Caco-2 (cell line): ENCODE measurements at regions of chr11 and their contacts with region 1.

Region 1: GRCh38 chr11:57345555-57346211 is 7.5 kb downstream of the P2RX3 start:
- DNase-seq: peak; percentile 76 to 82
- H3K4me3 ChIP-seq: no peak overlapping the region
- H3K4me3 Mint-ChIP-seq: no peak overlapping the region
- H3K27ac Mint-ChIP-seq: no peak overlapping the region
- H3K4me1 ChIP-seq: peaks cover 6% of the 10 kb centered on the region; the same call in 1 of the 2 replicates
- H3K4me1 Mint-ChIP-seq: peaks cover 7% of the 10 kb centered on the region
- H3K27me3 ChIP-seq: no peaks in the 10 kb centered on the region
- H3K27me3 Mint-ChIP-seq: no peaks in the 10 kb centered on the region
- CTCF ChIP-seq: peak; percentile 78 to 86

Region 2: GRCh38 chr11:56988614-56989013 is 357.1 kb before region 1 on chr11 and contains the start of gene OR5AK2:
- CTCF ChIA-PET with region 1: no interaction called
- POLR2A ChIA-PET with region 1: no interaction called
- intact Hi-C with region 1: no loop called
- DNase-seq: no peak
- H3K4me3 ChIP-seq: no peak within 1 kb of the TSS
- H3K4me3 Mint-ChIP-seq: no peak within 1 kb of the TSS
- H3K27ac Mint-ChIP-seq: no peak within 1 kb of the TSS
- H3K4me1 ChIP-seq: no peaks in the 10 kb centered on the region
- H3K4me1 Mint-ChIP-seq: no peaks in the 10 kb centered on the region
- H3K27me3 ChIP-seq: no peaks in the 10 kb centered on the region
- H3K27me3 Mint-ChIP-seq: no peaks in the 10 kb centered on the region
- CTCF ChIP-seq: no peak
- total RNA-seq, gene OR5AK2: not detected in 2 replicates

Region 3: GRCh38 chr11:57213342-57214095 is 132.2 kb before region 1 on chr11:
- CTCF ChIA-PET with region 1: no interaction called
- POLR2A ChIA-PET with region 1: no interaction called
- intact Hi-C with region 1: no loop called
- DNase-seq: no peak
- H3K4me3 ChIP-seq: no peak overlapping the region
- H3K4me3 Mint-ChIP-seq: no peak overlapping the region
- H3K27ac Mint-ChIP-seq: no peak overlapping the region
- H3K4me1 ChIP-seq: no peaks in the 10 kb centered on the region
- H3K4me1 Mint-ChIP-seq: no peaks in the 10 kb centered on the region
- H3K27me3 ChIP-seq: no peaks in the 10 kb centered on the region
- H3K27me3 Mint-ChIP-seq: peaks cover 5% of the 10 kb centered on the region
- CTCF ChIP-seq: no peak

Region 4: GRCh38 chr11:57269571-57270021 is 76.1 kb before region 1 on chr11:
- CTCF ChIA-PET with region 1: no interaction called
- POLR2A ChIA-PET with region 1: no interaction called
- intact Hi-C with region 1: no loop called
- DNase-seq: no peak
- H3K4me3 ChIP-seq: no peak overlapping the region
- H3K4me3 Mint-ChIP-seq: no peak overlapping the region
- H3K27ac Mint-ChIP-seq: no peak overlapping the region
- H3K4me1 ChIP-seq: no peaks in the 10 kb centered on the region
- H3K4me1 Mint-ChIP-seq: no peaks in the 10 kb centered on the region
- H3K27me3 ChIP-seq: no peaks in the 10 kb centered on the region; the same call in 1 of the 2 replicates
- H3K27me3 Mint-ChIP-seq: peaks cover 3% of the 10 kb centered on the region
- CTCF ChIP-seq: no peak

Region 5: GRCh38 chr11:57358543-57358961 is 12.9 kb after region 1 on chr11:
- CTCF ChIA-PET with region 1: interaction called, 11 read pairs
- POLR2A ChIA-PET with region 1: interaction called, 14 read pairs
- intact Hi-C with region 1: no loop called
- DNase-seq: no peak
- H3K4me3 ChIP-seq: no peak overlapping the region
- H3K4me3 Mint-ChIP-seq: no peak overlapping the region
- H3K27ac Mint-ChIP-seq: peak overlapping the region; percentile 74
- H3K4me1 ChIP-seq: peaks cover 40% of the 10 kb centered on the region
- H3K4me1 Mint-ChIP-seq: peaks cover 27% of the 10 kb centered on the region
- H3K27me3 ChIP-seq: no peaks in the 10 kb centered on the region
- H3K27me3 Mint-ChIP-seq: no peaks in the 10 kb centered on the region
- CTCF ChIP-seq: no peak

Region 6: GRCh38 chr11:57370251-57370650 is 24.6 kb after region 1 on chr11:
- CTCF ChIA-PET with region 1: no interaction called
- POLR2A ChIA-PET with region 1: no interaction called
- intact Hi-C with region 1: no loop called
- DNase-seq: no peak
- H3K4me3 ChIP-seq: no peak overlapping the region
- H3K4me3 Mint-ChIP-seq: no peak overlapping the region
- H3K27ac Mint-ChIP-seq: no peak overlapping the region
- H3K4me1 ChIP-seq: no peaks in the 10 kb centered on the region
- H3K4me1 Mint-ChIP-seq: no peaks in the 10 kb centered on the region
- H3K27me3 ChIP-seq: no peaks in the 10 kb centered on the region
- H3K27me3 Mint-ChIP-seq: no peaks in the 10 kb centered on the region
- CTCF ChIP-seq: no peak

Region 7: GRCh38 chr11:57456960-57457642 is 111.4 kb after region 1 on chr11:
- CTCF ChIA-PET with region 1: interaction called, 20 read pairs
- POLR2A ChIA-PET with region 1: no interaction called
- intact Hi-C with region 1: loop called (anchors 1 kb)
- DNase-seq: peak; percentile 88 to 92
- H3K4me3 ChIP-seq: no peak overlapping the region
- H3K4me3 Mint-ChIP-seq: peak overlapping the region; percentile 85
- H3K27ac Mint-ChIP-seq: no peak overlapping the region
- H3K4me1 ChIP-seq: peaks cover 28% of the 10 kb centered on the region
- H3K4me1 Mint-ChIP-seq: peaks cover 20% of the 10 kb centered on the region
- H3K27me3 ChIP-seq: peaks cover 3% of the 10 kb centered on the region; the same call in 1 of the 2 replicates
- H3K27me3 Mint-ChIP-seq: peaks cover 15% of the 10 kb centered on the region
- CTCF ChIP-seq: peak; percentile 98 to 99

Region 8: DNA sequence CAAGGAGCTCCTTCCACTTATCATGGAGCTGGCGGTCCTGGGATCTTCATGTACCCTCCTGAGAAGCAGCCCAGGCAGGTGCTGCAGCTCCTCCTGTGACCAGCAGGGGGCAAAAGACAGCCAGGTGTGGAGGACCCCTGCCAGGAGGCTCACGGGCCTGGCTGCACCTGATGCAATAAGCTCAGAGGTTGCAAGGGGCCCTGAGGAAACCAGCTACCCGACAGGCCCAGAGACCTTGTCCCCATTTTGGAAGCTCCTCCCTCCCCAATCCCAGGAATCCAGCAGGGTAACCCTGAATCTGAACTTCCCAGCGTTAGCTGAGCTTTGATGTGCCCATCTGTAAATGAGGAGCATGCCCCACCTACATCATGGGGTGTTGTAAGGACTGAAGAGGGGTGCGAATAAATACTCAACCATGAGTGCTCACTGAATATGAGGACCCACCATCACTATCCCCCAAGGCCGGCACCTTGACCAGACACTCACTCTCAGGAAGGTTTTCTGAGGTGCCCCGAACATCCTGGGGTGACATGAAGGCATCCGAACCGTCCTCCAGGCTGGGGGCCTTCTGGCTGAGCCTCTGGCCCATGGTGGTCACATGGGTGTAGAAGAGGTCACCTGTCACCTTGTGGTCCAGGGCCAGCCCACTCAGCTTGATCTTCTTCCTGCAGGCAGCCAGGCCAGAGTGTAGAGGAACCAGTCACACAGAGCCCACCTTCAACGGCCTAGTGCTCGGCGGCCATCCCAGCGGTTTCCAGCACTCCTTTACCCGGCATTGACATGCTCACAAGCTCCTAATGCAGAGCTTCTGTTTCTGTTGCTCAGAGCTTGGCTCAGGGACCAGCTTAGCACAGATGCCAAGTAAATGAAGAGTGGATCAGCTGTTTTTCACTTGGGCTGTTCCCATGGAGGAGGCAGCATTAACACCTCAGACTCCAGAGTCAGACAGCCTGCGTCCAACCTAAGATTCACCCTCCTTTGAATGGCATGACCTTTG is 148.1 kb after region 1 on chr11:
- CTCF ChIA-PET with region 1: interaction called, 13 read pairs
- POLR2A ChIA-PET with region 1: no interaction called
- intact Hi-C with region 1: no loop called
- DNase-seq: peak; percentile 95 to 96
- H3K4me3 ChIP-seq: no peak overlapping the region
- H3K4me3 Mint-ChIP-seq: peak overlapping the region; percentile 25
- H3K27ac Mint-ChIP-seq: peak overlapping the region; percentile 96
- H3K4me1 ChIP-seq: peaks cover 40% of the 10 kb centered on the region
- H3K4me1 Mint-ChIP-seq: peaks cover 28% of the 10 kb centered on the region
- H3K27me3 ChIP-seq: no peaks in the 10 kb centered on the region
- H3K27me3 Mint-ChIP-seq: no peaks in the 10 kb centered on the region
- CTCF ChIP-seq: peak; percentile 95 to 97

Region 9: DNA sequence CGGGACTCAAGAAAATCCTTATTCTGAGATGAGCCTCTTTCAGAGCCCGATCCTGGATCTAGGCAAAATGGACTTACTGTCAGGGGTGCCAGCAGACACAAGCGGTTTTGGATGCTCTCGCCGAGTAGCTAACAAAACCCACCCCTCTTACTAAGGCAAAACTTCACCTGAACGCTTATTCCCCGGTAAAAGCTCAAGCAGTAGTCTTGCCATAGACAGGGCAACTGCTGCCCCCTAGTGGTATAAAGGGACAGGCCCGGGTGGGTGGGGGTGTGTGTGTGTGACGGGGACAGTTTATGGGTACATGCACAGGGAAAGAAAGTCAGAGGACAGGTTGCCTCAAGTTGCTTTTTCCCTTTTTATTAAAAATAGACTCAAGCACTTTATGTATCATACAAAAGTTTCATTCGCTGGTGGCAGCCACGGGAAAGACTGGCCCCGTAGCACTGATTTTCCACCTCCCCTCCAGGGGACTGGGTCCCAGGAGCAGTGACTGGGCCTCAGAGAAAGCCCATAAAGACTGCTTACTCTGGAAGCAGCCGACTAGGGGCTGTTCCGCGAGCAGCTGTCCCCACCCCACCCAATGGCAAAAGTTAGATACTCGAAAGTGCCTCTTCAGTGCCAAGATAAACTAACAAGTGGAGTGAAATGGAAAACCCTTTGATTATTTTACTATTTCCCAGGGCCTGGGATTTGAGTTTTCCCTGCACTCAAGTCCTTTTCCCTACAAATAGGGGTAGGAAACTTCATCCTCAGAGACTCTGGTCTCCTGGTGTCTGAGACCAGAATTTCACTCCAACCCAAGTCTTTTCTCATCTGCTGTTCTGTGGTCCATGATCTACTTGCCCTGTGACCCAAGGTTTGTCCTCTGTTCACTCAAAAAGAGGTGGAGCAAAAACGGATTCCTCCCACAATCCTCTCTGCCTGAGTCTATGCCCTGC is 299.3 kb after region 1 on chr11:
- CTCF ChIA-PET with region 1: interaction called, 39 read pairs
- POLR2A ChIA-PET with region 1: no interaction called
- intact Hi-C with region 1: loop called (anchors 1 kb)
- DNase-seq: peak; percentile 86 to 91
- H3K4me3 ChIP-seq: no peak overlapping the region
- H3K4me3 Mint-ChIP-seq: no peak overlapping the region
- H3K27ac Mint-ChIP-seq: no peak overlapping the region
- H3K4me1 ChIP-seq: peaks cover 17% of the 10 kb centered on the region
- H3K4me1 Mint-ChIP-seq: peaks cover 8% of the 10 kb centered on the region
- H3K27me3 ChIP-seq: peaks cover 2% of the 10 kb centered on the region; the same call in 1 of the 2 replicates
- H3K27me3 Mint-ChIP-seq: peaks cover 9% of the 10 kb centered on the region
- CTCF ChIP-seq: peak; percentile 91 to 96